ENCODE measurements at regions of chr5 and their contacts with region 1.

Region 1: GRCh38 chr5:140346348-140347101 is at the start of gene HBEGF:
- DNase-seq: peak; percentile 25 to 59 (median 47)
- H3K4me3 ChIP-seq: peak within 1 kb of the TSS; percentile 51
- H3K4me3 Mint-ChIP-seq: peak within 1 kb of the TSS; percentile 76 to 86 (median 80)
- H3K27ac ChIP-seq: no peak within 1 kb of the TSS
- H3K27ac Mint-ChIP-seq: peak within 1 kb of the TSS in 3 of 8 donors; percentile 43 to 87 (median 51)
- H3K4me1 ChIP-seq: peaks cover 41% of the 10 kb centered on the region
- H3K4me1 Mint-ChIP-seq: peaks cover 21 to 30% (median 29%) of the 10 kb centered on the region in 3 donors
- H3K27me3 ChIP-seq: no peaks in the 10 kb centered on the region
- H3K27me3 Mint-ChIP-seq: peaks cover 20 to 33% of the 10 kb centered on the region in 2 donors
- total RNA-seq, gene HBEGF: 2.1 TPM

Region 2: GRCh38 chr5:140073296-140073695 is 273.2 kb before region 1 on chr5:
- CTCF ChIA-PET with region 1: no interaction called
- POLR2A ChIA-PET with region 1: no interaction called
- DNase-seq: peak in 2 of 5 donors; percentile 24 to 45
- H3K4me3 ChIP-seq: no peak overlapping the region
- H3K4me3 Mint-ChIP-seq: no peak overlapping the region
- H3K27ac ChIP-seq: no peak overlapping the region
- H3K27ac Mint-ChIP-seq: no peak overlapping the region
- H3K4me1 ChIP-seq: no peaks in the 10 kb centered on the region
- H3K4me1 Mint-ChIP-seq: no peaks in the 10 kb centered on the region
- H3K27me3 ChIP-seq: no peaks in the 10 kb centered on the region
- H3K27me3 Mint-ChIP-seq: peaks cover 11 to 25% of the 10 kb centered on the region in 2 donors

Region 3: GRCh38 chr5:140357726-140358093 is 11.2 kb after region 1 on chr5:
- CTCF ChIA-PET with region 1: interaction called, 24 read pairs
- POLR2A ChIA-PET with region 1: no interaction called
- DNase-seq: peak; percentile 53 to 77 (median 58)
- H3K4me3 ChIP-seq: peak overlapping the region; percentile 5
- H3K4me3 Mint-ChIP-seq: peak overlapping the region in 6 of 7 donors; percentile 15 to 81 (median 66)
- H3K27ac ChIP-seq: no peak overlapping the region
- H3K27ac Mint-ChIP-seq: peak overlapping the region in 5 of 8 donors; percentile 20 to 90 (median 72)
- H3K4me1 ChIP-seq: no peaks in the 10 kb centered on the region
- H3K4me1 Mint-ChIP-seq: peaks cover 9 to 10% (median 10%) of the 10 kb centered on the region in 3 donors
- H3K27me3 ChIP-seq: no peaks in the 10 kb centered on the region
- H3K27me3 Mint-ChIP-seq: peaks cover 0 to 12% of the 10 kb centered on the region in 2 donors